ENCODE measurements at regions of chr2 and their contacts with region 1.

Region 1: DNA sequence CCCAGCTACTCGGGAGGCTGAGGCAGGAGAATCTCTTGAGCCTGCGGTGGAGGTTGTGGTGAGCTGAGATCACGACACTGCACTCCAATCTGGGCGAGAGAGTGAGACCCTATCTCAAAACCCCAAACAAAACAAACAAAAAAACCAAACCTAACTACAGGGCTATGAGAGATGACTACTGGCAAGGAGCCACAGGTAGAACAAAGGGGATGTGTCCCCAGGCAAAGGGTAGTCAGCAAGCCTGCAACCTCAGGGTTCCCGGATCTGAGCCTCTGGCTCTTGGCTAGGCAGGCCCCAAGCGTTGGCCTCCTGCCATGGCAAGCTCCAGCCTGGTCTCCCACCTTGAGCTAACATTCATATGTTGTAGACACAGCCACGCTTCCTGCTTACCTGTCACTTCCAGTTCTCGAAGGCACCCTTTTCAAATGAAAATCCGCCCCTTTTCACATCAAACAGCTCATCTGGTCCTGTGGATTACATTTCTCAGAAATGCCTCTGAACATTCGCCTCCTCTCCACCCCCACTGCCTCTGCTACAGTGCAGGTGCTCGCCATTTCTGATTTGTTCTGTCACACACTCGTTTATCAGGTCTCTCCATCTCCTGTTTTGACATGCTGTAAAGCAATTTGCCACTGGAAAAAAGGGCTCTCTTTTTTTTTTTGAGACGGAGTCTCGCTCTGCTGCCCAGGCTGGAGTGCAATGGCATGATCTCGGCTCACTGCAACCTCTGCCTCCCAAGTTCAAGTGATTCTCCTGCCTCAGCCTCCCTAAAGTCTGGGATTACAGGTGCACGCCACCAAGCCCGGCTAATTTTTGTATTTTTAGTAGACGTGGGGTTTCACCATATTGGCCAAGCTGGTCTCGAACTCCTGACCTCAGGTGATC is 13.1 kb upstream of the ACTR3 start:
- DNase-seq: peak; percentile 95
- H3K4me3 Mint-ChIP-seq: peak overlapping the region; percentile 50
- H3K27ac Mint-ChIP-seq: peak overlapping the region; percentile 85
- H3K4me1 Mint-ChIP-seq: peaks cover 52% of the 10 kb centered on the region
- H3K27me3 Mint-ChIP-seq: no peaks in the 10 kb centered on the region

Region 2: DNA sequence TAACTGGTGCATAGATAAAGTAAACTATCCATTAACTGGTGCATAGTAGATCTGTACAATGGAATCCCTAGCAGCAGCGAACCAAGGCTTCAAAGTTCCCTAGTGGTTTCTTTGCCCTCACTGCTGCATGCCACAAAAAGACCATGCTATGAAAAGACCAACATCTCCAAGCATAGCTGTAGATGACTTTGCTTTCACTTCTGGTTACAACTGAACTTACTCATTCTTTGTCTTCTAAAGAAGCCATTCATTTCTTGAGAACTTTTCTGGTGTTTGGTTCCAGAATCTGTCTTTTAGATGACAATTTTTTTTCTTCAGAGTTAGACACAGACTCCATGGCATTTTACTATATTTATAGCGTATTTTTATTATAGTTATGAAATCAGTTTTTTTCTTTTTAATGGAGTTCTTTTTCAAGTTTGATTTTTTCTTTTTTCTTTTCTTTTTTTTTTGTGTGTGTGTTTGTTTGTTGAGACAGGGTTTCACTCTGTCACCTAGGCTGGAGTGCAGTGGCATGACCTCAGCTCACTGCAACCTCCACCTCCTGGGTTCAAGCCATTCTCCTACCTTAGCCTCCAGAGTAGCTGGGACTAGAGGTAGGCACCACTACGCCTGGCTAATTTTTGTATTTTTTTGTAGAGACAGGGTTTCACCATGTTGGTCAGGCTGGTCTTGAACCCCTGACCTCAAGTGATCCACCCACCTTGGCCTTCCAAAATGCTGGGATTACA is 183.9 kb before region 1 on chr2:
- CTCF ChIA-PET with region 1: interaction called, 5 read pairs
- intact Hi-C with region 1: loop called (anchors 1 kb)
- DNase-seq: peak; percentile 57
- H3K4me3 Mint-ChIP-seq: peak overlapping the region; percentile 6
- H3K27ac Mint-ChIP-seq: peak overlapping the region; percentile 77
- H3K4me1 Mint-ChIP-seq: peaks cover 34% of the 10 kb centered on the region
- H3K27me3 Mint-ChIP-seq: no peaks in the 10 kb centered on the region

Region 3: GRCh38 chr2:113791697-113792590 is 84.8 kb before region 1 on chr2:
- CTCF ChIA-PET with region 1: no interaction called
- intact Hi-C with region 1: loop called (anchors 1 kb)
- DNase-seq: peak; percentile 59
- H3K4me3 Mint-ChIP-seq: peak overlapping the region; percentile 26
- H3K27ac Mint-ChIP-seq: peak overlapping the region; percentile 94
- H3K4me1 Mint-ChIP-seq: peaks cover 36% of the 10 kb centered on the region
- H3K27me3 Mint-ChIP-seq: no peaks in the 10 kb centered on the region

Region 4: DNA sequence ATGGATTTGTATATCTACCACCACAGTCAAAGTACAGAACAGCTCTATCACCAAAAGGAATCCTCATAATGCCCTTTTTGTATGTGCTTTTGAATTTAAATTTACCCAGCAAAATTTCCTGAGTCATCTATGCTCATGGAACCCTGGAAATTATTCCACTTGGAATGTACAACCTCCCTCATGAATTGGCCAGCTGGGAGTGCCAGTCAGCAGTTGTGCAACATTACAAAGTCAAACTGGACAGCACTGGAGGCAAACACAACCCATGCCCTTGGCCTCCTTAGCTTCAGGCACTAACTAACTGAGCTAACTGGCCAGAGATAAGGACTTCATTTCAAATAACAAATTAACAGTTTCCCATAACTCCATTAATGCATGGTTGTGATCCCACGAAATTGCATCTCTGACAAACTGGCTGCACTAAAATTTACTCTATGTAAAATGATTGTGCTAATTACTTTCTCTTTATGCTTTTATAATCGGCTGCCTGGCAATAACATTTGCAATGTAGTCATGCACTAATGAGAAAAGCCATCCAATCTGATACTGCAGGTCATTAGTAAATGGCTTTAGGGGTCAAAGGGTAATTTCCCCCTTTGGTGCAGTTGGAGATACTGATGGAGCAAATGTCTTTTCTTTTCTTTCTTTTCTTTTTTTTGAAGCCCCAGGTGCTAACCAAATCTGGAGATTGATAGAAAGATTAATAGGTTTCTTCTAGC is 283.7 kb after region 1 on chr2:
- CTCF ChIA-PET with region 1: no interaction called
- intact Hi-C with region 1: no loop called
- DNase-seq: no peak
- H3K4me3 Mint-ChIP-seq: no peak overlapping the region
- H3K27ac Mint-ChIP-seq: no peak overlapping the region
- H3K4me1 Mint-ChIP-seq: no peaks in the 10 kb centered on the region
- H3K27me3 Mint-ChIP-seq: peaks cover 2% of the 10 kb centered on the region